ENCODE measurements at regions of chr2 and their contacts with region 1.

Region 1: GRCh38 chr2:241877989-241878970 is 8.8 kb downstream of the RTP5 start:
- DNase-seq: peak; percentile 45 to 86 (median 73)
- ATAC-seq: no peak
- H3K4me3 ChIP-seq: no peak overlapping the region
- H3K4me3 Mint-ChIP-seq: no peak overlapping the region
- H3K27ac ChIP-seq: no peak overlapping the region
- H3K27ac Mint-ChIP-seq: no peak overlapping the region
- H3K4me1 ChIP-seq: peaks cover 20% of the 10 kb centered on the region
- H3K4me1 Mint-ChIP-seq: peaks cover 25% of the 10 kb centered on the region
- H3K27me3 ChIP-seq: no peaks in the 10 kb centered on the region
- H3K27me3 Mint-ChIP-seq: no peaks in the 10 kb centered on the region
- CTCF ChIP-seq: peak; percentile 56

Region 2: GRCh38 chr2:240832205-240832727 is 1046.0 kb before region 1 on chr2:
- CTCF ChIA-PET with region 1: no interaction called
- POLR2A ChIA-PET with region 1: no interaction called
- intact Hi-C with region 1: loop called (anchors 1 to 2 kb)
- DNase-seq: peak; percentile 96 to 99 (median 99)
- ATAC-seq: peak; percentile 93
- H3K4me3 ChIP-seq: peak overlapping the region; percentile 49 to 64
- H3K4me3 Mint-ChIP-seq: no peak overlapping the region
- H3K27ac ChIP-seq: peak overlapping the region in 1 of 2 experiments; percentile 19
- H3K27ac Mint-ChIP-seq: no peak overlapping the region
- H3K4me1 ChIP-seq: peaks cover 11% of the 10 kb centered on the region
- H3K4me1 Mint-ChIP-seq: peaks cover 6% of the 10 kb centered on the region
- H3K27me3 ChIP-seq: peaks cover 4 to 9% of the 10 kb centered on the region in 2 experiments
- H3K27me3 Mint-ChIP-seq: peaks cover 12% of the 10 kb centered on the region
- CTCF ChIP-seq: no peak

Region 3: DNA sequence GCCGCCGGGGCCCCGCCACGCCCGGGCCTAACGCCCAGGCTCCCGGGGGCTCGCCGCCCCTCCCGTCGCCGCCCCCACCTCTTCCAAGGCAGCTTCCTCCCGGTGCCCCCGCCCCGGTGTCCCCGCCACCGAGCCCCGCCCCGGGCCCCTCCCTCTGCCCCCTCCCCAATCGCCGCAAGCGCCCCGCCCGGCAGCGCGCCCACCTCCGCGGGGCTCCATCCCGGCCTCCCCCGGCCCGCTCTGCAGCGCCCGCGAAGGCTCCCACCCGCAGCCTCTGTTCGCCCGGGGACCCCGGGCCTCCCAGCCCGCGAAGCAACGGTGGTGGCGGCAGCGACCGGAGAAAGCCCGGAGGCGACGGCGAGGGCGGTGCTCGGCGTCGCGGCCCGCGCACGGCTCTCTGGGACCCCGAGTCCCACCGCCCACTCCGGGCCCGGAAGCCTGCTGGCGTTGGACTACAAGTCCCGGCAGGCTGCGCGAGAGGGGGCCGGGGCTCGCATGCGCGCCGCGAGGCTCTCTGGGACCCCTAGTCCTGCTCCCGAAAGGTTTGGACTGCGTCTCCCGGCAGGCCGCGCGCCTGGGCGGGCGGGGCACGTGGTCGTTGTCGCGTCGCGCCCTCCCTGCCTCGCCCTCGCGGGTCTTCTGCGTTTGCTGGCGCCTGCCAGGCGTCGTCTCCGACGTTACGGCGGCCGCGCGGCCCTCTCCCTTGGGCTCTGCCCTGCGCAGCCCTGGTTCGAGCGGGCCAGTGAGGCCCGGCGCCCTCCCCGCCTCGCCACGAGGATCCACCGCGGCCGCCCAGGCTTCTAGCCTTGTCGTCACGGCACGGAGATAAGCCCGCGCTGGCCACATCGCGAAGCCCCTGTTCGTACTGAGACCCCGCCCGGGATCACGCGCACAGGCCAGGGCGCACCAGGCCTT is 369.8 kb before region 1 on chr2 and contains the start of gene STK25:
- CTCF ChIA-PET with region 1: no interaction called
- POLR2A ChIA-PET with region 1: no interaction called
- intact Hi-C with region 1: loop called (anchors 1 kb)
- DNase-seq: peak; percentile 94 to 98 (median 97)
- ATAC-seq: peak; percentile 93
- H3K4me3 ChIP-seq: peak within 1 kb of the TSS; percentile 71 to 72
- H3K4me3 Mint-ChIP-seq: peak within 1 kb of the TSS; percentile 81
- H3K27ac ChIP-seq: peak within 1 kb of the TSS; percentile 78 to 81
- H3K27ac Mint-ChIP-seq: peak within 1 kb of the TSS; percentile 85
- H3K4me1 ChIP-seq: peaks cover 21% of the 10 kb centered on the region
- H3K4me1 Mint-ChIP-seq: peaks cover 24% of the 10 kb centered on the region
- H3K27me3 ChIP-seq: no peaks in the 10 kb centered on the region
- H3K27me3 Mint-ChIP-seq: no peaks in the 10 kb centered on the region
- CTCF ChIP-seq: no peak
- total RNA-seq, gene STK25: 58.7 to 66.4 TPM

Region 4: DNA sequence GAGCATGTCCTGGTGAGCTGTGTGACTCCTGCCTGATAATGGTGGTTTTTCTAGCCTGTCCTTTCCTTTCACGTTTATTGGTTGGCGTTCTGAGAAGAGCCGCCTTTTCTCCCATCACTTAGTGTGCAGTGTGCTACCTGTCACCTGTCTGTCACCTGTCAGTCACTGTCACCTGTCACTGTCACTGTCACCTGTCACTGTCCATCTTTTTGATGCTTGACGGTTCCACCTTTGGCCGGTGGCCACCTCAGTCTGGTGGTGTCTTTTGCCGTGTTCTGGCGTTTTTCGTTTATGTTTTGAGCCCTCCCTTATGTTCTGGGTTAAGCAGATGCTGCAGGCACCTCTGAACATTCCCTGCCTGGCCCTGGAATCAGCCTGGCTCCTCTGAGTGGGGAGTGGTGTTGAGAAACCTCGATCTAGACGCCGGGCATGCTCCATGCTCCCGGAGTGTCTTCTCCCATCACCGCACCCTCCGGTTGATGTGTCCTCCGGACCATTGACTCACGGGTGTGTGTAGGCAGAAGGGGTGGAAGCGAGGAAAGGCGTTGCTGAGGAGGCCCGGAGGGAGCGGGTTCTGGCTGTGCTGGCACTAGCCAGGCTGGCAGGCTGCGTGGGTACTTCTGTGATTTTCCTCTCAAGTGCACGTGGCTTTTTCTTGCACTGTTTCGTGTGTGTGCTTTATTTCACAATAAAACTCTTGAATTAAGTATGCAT is 212.4 kb before region 1 on chr2:
- CTCF ChIA-PET with region 1: interaction called, 6 read pairs
- POLR2A ChIA-PET with region 1: no interaction called
- intact Hi-C with region 1: loop called in 1 of 2 experiments (anchors 1 kb)
- DNase-seq: no peak
- ATAC-seq: no peak
- H3K4me3 ChIP-seq: no peak overlapping the region
- H3K4me3 Mint-ChIP-seq: no peak overlapping the region
- H3K27ac ChIP-seq: no peak overlapping the region
- H3K27ac Mint-ChIP-seq: no peak overlapping the region
- H3K4me1 ChIP-seq: no peaks in the 10 kb centered on the region
- H3K4me1 Mint-ChIP-seq: peaks cover 3% of the 10 kb centered on the region
- H3K27me3 ChIP-seq: no peaks in the 10 kb centered on the region
- H3K27me3 Mint-ChIP-seq: no peaks in the 10 kb centered on the region
- CTCF ChIP-seq: no peak

Region 5: GRCh38 chr2:241724259-241724974 is 153.9 kb before region 1 on chr2:
- CTCF ChIA-PET with region 1: interaction called, 12 read pairs
- POLR2A ChIA-PET with region 1: no interaction called
- intact Hi-C with region 1: loop called in 1 of 2 experiments (anchors 1 kb)
- DNase-seq: peak in 7 of 9 experiments; percentile 4 to 60 (median 51)
- ATAC-seq: peak; percentile 77
- H3K4me3 ChIP-seq: no peak overlapping the region
- H3K4me3 Mint-ChIP-seq: no peak overlapping the region
- H3K27ac ChIP-seq: no peak overlapping the region
- H3K27ac Mint-ChIP-seq: no peak overlapping the region
- H3K4me1 ChIP-seq: no peaks in the 10 kb centered on the region
- H3K4me1 Mint-ChIP-seq: no peaks in the 10 kb centered on the region
- H3K27me3 ChIP-seq: no peaks in the 10 kb centered on the region
- H3K27me3 Mint-ChIP-seq: no peaks in the 10 kb centered on the region
- CTCF ChIP-seq: peak; percentile 40

Region 6: DNA sequence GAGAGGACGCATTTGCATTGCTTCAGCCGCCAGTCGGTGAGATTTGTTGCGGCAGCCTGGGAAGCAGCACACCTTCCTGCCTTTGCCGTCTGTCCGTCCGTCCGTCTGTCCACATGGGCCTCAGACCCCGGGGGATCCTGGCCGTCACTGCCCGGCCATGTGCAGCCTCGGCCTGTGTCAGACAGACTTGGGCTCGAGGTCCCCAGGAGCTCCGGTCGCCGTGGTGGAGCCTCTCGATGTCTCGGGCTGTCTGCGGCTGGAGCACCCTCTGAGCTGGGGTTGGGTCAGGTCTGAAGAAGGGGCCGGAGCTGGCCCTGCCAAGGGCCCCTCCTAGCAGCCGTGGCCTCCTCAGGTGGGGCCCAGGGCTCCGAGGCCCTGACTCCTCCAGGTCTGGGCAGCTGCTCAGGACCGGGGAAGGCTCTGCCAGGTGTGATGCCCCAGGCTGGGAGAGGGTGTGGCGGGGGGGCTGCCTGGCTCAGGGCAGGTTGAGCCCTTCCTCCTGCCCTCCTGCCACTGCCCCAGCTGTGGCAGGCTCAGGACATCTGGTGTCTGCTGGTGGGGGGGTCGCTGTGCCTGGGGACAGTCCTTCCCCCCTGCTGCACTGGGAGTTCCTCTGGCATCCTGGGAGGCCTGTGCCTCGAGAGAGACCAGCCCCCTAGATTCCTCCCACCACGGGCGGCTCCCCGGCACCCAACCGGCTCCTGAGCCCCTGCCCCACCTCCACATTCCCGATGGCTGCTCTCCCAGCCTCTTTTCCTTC is 57.5 kb before region 1 on chr2:
- CTCF ChIA-PET with region 1: no interaction called
- POLR2A ChIA-PET with region 1: no interaction called
- intact Hi-C with region 1: no loop called
- DNase-seq: peak in 3 of 9 experiments; percentile 2 to 29 (median 16)
- ATAC-seq: no peak
- H3K4me3 ChIP-seq: no peak overlapping the region
- H3K4me3 Mint-ChIP-seq: no peak overlapping the region
- H3K27ac ChIP-seq: no peak overlapping the region
- H3K27ac Mint-ChIP-seq: no peak overlapping the region
- H3K4me1 ChIP-seq: peaks cover 18% of the 10 kb centered on the region
- H3K4me1 Mint-ChIP-seq: peaks cover 8% of the 10 kb centered on the region
- H3K27me3 ChIP-seq: no peaks in the 10 kb centered on the region
- H3K27me3 Mint-ChIP-seq: peaks cover 4% of the 10 kb centered on the region
- CTCF ChIP-seq: no peak

Region 7: DNA sequence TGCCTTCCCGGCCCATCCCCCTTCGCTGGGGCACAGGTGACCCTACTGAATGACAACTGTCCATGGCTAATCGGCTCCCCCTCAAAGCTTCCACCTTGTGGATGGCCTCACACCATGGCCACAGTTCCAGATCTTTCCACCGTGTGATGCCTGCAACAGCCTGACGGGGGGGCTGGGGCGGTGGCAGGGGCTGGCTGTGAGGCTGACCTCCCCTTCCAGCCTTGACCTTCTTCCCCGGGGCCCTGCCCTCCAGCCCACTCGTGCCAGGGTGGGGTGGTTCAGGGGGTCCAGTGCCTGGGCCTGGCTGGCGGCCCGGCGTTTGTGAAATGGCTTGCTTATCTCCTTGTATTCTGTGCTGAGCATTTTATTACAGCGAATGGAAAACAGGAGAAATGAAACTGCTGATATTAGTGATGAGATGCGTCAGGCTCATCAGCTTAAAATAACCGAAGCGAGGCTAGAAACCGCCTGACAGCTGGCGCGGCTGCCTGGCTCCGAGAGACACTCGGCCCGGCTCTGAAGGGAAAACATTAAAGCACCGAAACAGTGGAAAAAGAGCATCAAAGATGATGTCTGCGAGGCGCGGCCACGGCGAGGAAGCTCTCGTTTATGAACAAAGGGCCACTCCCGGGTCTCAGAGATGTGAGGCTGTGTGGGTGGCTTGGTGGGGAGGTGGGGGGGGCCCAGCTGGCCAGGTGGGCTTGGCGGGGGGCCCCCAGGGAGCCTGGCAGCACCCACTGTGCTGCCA is 18.7 kb before region 1 on chr2:
- CTCF ChIA-PET with region 1: interaction called, 3 read pairs
- POLR2A ChIA-PET with region 1: interaction called, 3 read pairs
- intact Hi-C with region 1: loop called in 1 of 2 experiments (anchors 1 kb)
- DNase-seq: peak in 5 of 9 experiments; percentile 39 to 63 (median 54)
- ATAC-seq: peak; percentile 34
- H3K4me3 ChIP-seq: peak overlapping the region; percentile 24 to 57
- H3K4me3 Mint-ChIP-seq: peak overlapping the region; percentile 82
- H3K27ac ChIP-seq: peak overlapping the region in 1 of 2 experiments; percentile 72
- H3K27ac Mint-ChIP-seq: peak overlapping the region; percentile 93
- H3K4me1 ChIP-seq: peaks cover 43% of the 10 kb centered on the region
- H3K4me1 Mint-ChIP-seq: peaks cover 53% of the 10 kb centered on the region
- H3K27me3 ChIP-seq: peaks cover 0 to 20% of the 10 kb centered on the region in 2 experiments
- H3K27me3 Mint-ChIP-seq: peaks cover 15% of the 10 kb centered on the region
- CTCF ChIP-seq: no peak

Measured in CD8-positive, alpha-beta T cell (primary cell).